Adrenal gland (tissue), 19 donors: ENCODE measurements at regions of chr17 and their contacts with region 1.

Region 1: DNA sequence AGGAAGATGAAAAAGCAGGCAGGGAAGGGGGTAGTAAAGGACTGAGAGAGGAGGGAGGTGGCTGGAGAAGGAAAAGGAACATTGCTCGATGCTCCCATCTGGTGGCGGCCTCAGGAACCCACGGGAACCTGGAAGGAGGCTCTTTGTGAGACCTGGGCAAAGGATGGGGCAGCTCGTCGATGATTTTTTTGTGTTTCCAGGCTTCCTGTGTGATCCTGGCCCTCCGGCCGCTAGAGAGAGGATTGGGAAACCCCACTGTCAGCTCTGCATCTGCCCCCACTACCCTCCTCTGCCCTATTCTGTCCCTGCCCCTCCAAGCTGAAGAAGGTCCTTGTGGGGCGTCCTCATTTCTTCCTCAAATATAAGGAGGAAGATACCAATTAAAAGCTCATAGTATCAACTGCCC is 6.6 kb downstream of the WFIKKN2 start:
- DNase-seq: peak; percentile 57 to 87 (median 75)
- H3K4me3 ChIP-seq: no peak overlapping the region
- H3K27ac ChIP-seq: no peak overlapping the region
- H3K4me1 ChIP-seq: no peaks in the 10 kb centered on the region
- H3K27me3 ChIP-seq: no peaks in the 10 kb centered on the region
- CTCF ChIP-seq: peak; percentile 68 to 94 (median 83)
- POLR2A ChIP-seq: no peak

Region 2: GRCh38 chr17:50749245-50749644 is 92.7 kb before region 1 on chr17:
- intact Hi-C with region 1: no loop called
- DNase-seq: no peak
- H3K4me3 ChIP-seq: no peak overlapping the region
- H3K27ac ChIP-seq: no peak overlapping the region
- H3K4me1 ChIP-seq: no peaks in the 10 kb centered on the region
- H3K27me3 ChIP-seq: no peaks in the 10 kb centered on the region
- CTCF ChIP-seq: no peak
- POLR2A ChIP-seq: no peak

Region 3: GRCh38 chr17:50765454-50766221 is 76.3 kb before region 1 on chr17:
- intact Hi-C with region 1: no loop called
- DNase-seq: peak in 2 of 7 donors; percentile 19 to 53
- H3K4me3 ChIP-seq: no peak overlapping the region
- H3K27ac ChIP-seq: no peak overlapping the region
- H3K4me1 ChIP-seq: peaks cover 0 to 13% of the 10 kb centered on the region in 2 donors
- H3K27me3 ChIP-seq: no peaks in the 10 kb centered on the region
- CTCF ChIP-seq: no peak
- POLR2A ChIP-seq: no peak

Region 4: DNA sequence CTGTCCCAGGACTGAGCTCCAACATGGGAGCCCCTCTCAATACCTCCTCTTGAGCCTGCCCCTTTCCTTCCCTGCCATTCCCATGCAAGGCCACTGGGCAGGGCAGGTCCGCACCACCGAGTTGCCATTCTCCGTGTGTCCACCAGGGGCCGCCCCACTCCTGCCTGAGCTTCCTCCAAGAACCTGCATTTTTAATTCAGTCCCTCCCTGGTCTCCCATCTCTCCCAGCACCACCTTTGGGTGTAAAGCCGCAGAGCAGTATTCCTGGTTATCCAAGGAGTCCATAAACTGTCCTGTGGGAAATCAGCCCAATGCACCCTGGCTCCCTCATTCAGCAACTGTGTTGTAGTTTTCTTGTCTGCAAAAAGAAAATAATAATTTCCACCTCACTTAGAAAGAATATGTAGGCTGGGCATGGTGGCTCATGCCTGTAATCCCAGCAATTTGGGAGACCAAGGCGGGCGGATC is 58.7 kb before region 1 on chr17:
- intact Hi-C with region 1: loop called (anchors 2 kb)
- DNase-seq: peak; percentile 82 to 95 (median 88)
- H3K4me3 ChIP-seq: no peak overlapping the region
- H3K27ac ChIP-seq: no peak overlapping the region
- H3K4me1 ChIP-seq: no peaks in the 10 kb centered on the region
- H3K27me3 ChIP-seq: no peaks in the 10 kb centered on the region
- CTCF ChIP-seq: peak; percentile 95 to 100 (median 100)
- POLR2A ChIP-seq: no peak

Region 5: GRCh38 chr17:50816771-50817751 is 24.9 kb before region 1 on chr17:
- intact Hi-C with region 1: loop called (anchors 2 kb)
- DNase-seq: peak in 5 of 7 donors; percentile 44 to 61 (median 52)
- H3K4me3 ChIP-seq: no peak overlapping the region
- H3K27ac ChIP-seq: no peak overlapping the region
- H3K4me1 ChIP-seq: peaks cover 0 to 6% of the 10 kb centered on the region in 2 donors
- H3K27me3 ChIP-seq: no peaks in the 10 kb centered on the region
- CTCF ChIP-seq: peak; percentile 51 to 75 (median 66)
- POLR2A ChIP-seq: no peak

Region 6: GRCh38 chr17:50944054-50944901 is 102.3 kb after region 1 on chr17:
- intact Hi-C with region 1: no loop called
- DNase-seq: peak; percentile 81 to 90 (median 86)
- H3K4me3 ChIP-seq: peak overlapping the region in 2 of 4 donors; percentile 15 to 58
- H3K27ac ChIP-seq: peak overlapping the region; percentile 60 to 95 (median 79)
- H3K4me1 ChIP-seq: peaks cover 33 to 44% of the 10 kb centered on the region in 2 donors
- H3K27me3 ChIP-seq: no peaks in the 10 kb centered on the region
- CTCF ChIP-seq: peak in 3 of 6 experiments; percentile 10 to 19 (median 10)
- POLR2A ChIP-seq: peak; percentile 76 to 86

Region 7: GRCh38 chr17:50956750-50957523 is 115.0 kb after region 1 on chr17:
- intact Hi-C with region 1: no loop called
- DNase-seq: peak; percentile 67 to 88 (median 79)
- H3K4me3 ChIP-seq: no peak overlapping the region
- H3K27ac ChIP-seq: peak overlapping the region; percentile 75 to 99 (median 95)
- H3K4me1 ChIP-seq: peaks cover 35 to 41% of the 10 kb centered on the region in 2 donors
- H3K27me3 ChIP-seq: no peaks in the 10 kb centered on the region
- CTCF ChIP-seq: peak; percentile 40 to 78 (median 66)
- POLR2A ChIP-seq: no peak